PC-9 (cell line): ENCODE measurements at regions of chr15 and their contacts with region 1.

Region 1: DNA sequence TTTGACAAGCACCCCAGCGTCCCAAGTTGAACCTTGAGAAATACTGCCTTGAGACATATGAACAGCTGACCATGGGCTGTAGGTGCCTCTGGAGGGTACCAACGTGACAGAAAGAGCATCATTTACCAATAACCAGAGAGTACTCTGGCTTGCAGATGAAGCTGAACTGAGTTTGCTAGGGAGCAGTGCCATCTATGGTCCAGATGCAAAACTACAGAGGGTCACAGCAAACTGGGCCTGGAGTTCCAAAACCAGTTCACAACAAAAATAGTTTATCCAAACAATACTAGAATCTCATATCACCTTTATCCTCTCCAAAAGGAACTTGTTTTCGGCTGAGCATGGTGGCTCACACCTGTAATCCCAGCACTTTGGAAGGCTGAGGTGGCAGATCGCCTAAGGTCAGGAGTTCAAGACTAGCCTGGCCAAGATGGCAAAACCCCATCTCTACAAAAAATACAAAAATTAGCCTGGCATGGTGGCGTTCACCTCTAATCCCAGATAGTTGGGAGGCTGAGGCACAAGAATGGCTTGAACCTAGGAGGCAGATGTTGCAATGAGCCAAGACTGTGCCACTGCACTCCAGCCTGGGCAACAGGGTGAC is 69.3 kb downstream of the CHAC1 start:
- DNase-seq: peak in 1 of 2 experiments; percentile 36
- H3K4me3 ChIP-seq: no peak overlapping the region
- H3K27ac ChIP-seq: no peak overlapping the region
- H3K4me1 ChIP-seq: peaks cover 12% of the 10 kb centered on the region
- H3K27me3 ChIP-seq: no peaks in the 10 kb centered on the region
- CTCF ChIP-seq: peak; percentile 65

Region 2: DNA sequence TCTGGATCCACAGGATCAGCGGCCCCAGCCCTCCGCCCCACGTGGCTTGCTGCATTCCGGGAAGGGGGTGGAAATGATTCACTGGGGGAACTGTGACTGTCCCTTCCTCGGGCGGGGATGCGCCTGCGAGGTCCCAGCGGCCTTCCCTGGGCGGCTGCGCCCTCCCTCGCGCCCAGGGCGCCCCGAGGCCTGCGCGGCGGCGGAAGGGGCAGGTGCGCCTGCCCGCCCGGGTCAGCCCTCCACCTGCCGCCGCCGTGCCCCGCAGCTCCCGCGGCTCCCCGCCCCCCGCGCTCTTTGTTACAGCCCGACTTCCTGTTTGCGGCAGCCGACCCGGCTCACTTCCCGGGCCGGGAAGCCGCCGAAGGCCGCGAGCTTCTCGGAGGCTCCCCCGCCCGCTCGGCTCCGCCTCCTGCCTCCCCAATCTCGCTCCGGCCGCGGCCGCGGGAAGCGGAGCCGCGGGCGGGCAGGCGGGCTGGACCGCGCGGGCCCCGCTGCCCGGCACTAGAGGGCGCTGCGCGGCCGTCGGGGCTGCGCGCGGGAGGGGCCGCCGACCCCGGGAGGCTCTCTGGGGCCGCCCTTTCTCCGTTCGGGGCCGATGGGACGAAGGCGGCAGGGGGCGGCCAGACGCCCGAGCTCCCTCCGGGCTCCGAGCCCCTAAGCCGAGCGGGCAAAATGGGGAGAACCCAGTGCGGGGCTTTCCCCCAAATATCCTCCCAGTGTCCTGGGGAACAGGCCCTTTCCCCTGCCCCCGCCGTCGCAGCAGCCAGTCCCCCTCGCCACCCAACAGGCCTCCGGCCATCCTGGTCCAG is 80.9 kb before region 1 on chr15:
- CTCF ChIA-PET with region 1: interaction called, 10 read pairs
- POLR2A ChIA-PET with region 1: no interaction called
- intact Hi-C with region 1: loop called (anchors 1 kb)
- DNase-seq: peak; percentile 55 to 82
- H3K4me3 ChIP-seq: peak overlapping the region; percentile 64; the same call in 1 of the 2 replicates
- H3K27ac ChIP-seq: peak overlapping the region; percentile 32; the same call in 1 of the 2 replicates
- H3K4me1 ChIP-seq: 0 out of 2 replicates have a peak, but pooled peaks cover 6% of the 10 kb centered on the region
- H3K27me3 ChIP-seq: no peaks in the 10 kb centered on the region
- CTCF ChIP-seq: peak; percentile 36; the same call in 1 of the 2 replicates

Region 3: DNA sequence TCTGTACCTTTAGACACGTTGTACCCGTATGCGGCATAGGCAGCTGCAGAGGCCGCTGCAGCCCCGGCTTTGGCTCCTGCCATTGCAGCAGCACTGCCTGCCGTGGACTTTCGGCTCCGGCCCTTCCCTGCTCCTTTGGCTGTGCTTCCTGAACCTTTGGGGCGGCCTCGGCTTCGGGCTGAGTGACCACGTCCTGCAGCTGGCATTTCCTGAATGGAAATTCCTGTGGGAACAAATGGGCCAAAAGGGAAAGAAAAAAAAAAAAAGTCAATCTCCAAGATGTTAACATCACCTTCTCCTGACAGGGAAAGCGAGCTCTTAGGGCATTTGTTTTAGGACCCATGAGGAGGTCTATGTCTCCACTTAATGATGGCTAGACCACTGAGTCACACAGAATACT is 39.7 kb before region 1 on chr15:
- CTCF ChIA-PET with region 1: interaction called, 3 read pairs
- POLR2A ChIA-PET with region 1: interaction called, 13 read pairs
- intact Hi-C with region 1: no loop called
- DNase-seq: no peak
- H3K4me3 ChIP-seq: no peak overlapping the region
- H3K27ac ChIP-seq: no peak overlapping the region
- H3K4me1 ChIP-seq: no peaks in the 10 kb centered on the region
- H3K27me3 ChIP-seq: no peaks in the 10 kb centered on the region
- CTCF ChIP-seq: no peak

Region 4: GRCh38 chr15:40999190-40999589 is 23.4 kb before region 1 on chr15:
- CTCF ChIA-PET with region 1: interaction called, 13 read pairs
- POLR2A ChIA-PET with region 1: no interaction called
- intact Hi-C with region 1: no loop called
- DNase-seq: peak in 1 of 2 experiments; percentile 86
- H3K4me3 ChIP-seq: no peak overlapping the region
- H3K27ac ChIP-seq: peak overlapping the region; percentile 84
- H3K4me1 ChIP-seq: peaks cover 10% of the 10 kb centered on the region
- H3K27me3 ChIP-seq: no peaks in the 10 kb centered on the region
- CTCF ChIP-seq: no peak

Region 5: DNA sequence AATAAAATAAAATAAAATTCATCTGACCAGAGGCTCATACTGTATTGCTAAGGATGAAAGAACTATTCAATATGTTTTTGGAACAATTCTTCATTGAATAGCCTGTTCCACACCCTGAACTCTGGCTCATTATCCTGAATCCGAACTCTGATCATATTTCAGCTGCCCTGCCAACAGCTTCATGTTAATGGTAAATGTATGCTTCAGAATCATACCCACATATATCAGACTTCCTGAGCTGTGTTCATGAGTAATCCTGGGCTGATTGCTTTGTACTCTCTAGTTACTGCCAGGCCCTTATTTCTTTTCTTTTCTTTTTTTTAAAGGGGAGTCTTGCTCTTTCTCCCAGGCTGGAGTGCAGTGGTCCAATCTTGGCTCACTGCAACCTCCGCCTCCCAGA is 81.6 kb after region 1 on chr15:
- CTCF ChIA-PET with region 1: no interaction called
- POLR2A ChIA-PET with region 1: no interaction called
- intact Hi-C with region 1: no loop called
- DNase-seq: no peak
- H3K4me3 ChIP-seq: no peak overlapping the region
- H3K27ac ChIP-seq: no peak overlapping the region
- H3K4me1 ChIP-seq: no peaks in the 10 kb centered on the region
- H3K27me3 ChIP-seq: no peaks in the 10 kb centered on the region
- CTCF ChIP-seq: no peak

Region 6: DNA sequence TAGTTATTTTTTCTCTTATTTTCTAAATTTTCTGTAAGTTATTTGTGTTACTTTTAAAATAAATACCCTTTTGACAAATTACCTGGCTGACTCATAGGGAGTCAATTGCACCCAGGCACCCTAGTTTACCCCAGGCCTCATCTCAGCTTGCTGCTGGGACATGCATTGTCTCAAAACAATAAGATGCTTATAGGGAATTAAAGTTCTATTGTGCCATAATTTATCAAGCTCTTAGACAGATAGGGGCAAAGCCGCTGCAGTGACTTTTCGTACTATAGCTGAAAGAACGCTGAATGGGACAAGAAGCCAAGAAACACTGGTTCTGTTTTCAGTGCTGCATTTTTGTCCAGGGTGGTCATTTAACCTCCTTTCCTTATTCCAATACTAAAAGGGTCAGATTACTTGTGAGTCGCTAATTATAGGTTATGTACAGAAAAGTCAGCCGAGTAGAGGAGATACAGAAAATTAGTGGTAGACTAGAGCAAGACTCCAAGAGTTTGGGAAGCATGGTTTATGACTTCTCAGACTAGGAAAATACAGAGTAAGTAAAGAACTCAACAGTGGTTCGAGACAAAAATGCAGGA is 157.7 kb after region 1 on chr15:
- CTCF ChIA-PET with region 1: interaction called, 3 read pairs
- POLR2A ChIA-PET with region 1: no interaction called
- intact Hi-C with region 1: loop called (anchors 10 kb)
- DNase-seq: no peak
- H3K4me3 ChIP-seq: no peak overlapping the region
- H3K27ac ChIP-seq: no peak overlapping the region
- H3K4me1 ChIP-seq: peaks cover 9% of the 10 kb centered on the region
- H3K27me3 ChIP-seq: no peaks in the 10 kb centered on the region
- CTCF ChIP-seq: no peak